Breast epithelium (tissue), 4 donors: ENCODE measurements at regions of chr6 and their contacts with region 1.

Region 1: DNA sequence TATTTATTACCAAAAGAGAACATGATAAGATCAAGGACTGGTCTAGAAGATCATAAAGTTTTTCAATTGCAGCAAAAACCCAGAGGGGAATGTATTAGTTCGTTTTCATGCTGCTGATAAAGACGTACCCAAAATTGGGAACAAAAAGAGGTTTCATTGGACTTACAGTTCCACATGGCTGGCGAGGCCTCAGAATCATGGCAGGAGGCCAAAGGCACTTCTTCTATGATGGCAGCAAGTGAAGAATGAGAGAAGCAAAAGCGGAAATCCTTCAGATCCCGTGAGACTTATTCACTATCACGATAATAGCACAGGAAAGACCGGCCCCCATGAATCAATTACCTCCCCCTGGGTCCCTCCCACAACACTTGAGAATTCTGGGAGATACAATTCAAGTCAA is 57.7 kb upstream of the HIVEP2 start:
- DNase-seq: no peak
- H3K4me3 ChIP-seq: no peak overlapping the region
- H3K27ac ChIP-seq: no peak overlapping the region
- H3K4me1 ChIP-seq: no peaks in the 10 kb centered on the region
- H3K27me3 ChIP-seq: no peaks in the 10 kb centered on the region
- CTCF ChIP-seq: no peak
- POLR2A ChIP-seq: no peak

Region 2: DNA sequence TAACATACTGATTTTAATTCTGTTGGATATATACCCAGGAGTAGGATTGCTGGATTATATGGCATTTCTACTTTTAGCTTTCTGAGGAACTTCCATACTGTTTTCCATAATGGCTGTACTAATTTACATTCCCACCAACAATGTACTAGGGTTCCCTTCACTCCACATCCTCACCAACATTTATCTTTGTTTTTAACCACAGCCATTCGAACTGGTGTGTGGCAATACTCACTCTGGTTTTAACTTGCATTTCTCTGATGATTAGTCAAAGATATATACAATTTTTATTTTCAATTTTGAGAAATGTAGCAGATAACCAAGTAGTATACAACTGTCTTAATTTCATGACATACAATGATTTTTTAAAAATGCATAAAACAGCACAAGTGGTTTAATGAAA is 731.2 kb before region 1 on chr6:
- intact Hi-C with region 1: no loop called
- DNase-seq: no peak
- H3K4me3 ChIP-seq: no peak overlapping the region
- H3K27ac ChIP-seq: no peak overlapping the region
- H3K4me1 ChIP-seq: no peaks in the 10 kb centered on the region
- H3K27me3 ChIP-seq: no peaks in the 10 kb centered on the region
- CTCF ChIP-seq: no peak
- POLR2A ChIP-seq: no peak

Region 3: DNA sequence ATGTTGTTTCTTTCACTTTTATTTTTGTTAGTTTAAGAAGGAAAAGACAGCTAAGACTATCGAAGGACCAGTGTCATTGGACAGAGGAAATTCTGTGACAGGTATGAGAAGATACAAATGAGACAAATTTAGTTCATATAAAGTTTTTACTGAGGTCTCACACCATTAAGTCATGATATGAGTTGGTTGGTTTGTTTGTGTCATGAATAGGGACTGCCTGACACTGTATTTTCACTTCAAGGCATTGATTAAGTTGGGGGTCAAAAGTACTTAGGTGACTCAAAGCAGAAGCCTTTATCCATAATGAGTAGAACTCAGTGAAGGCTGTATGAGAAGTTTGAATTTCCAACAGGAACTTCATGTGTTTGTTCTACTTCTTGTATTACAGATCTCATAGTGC is 36.4 kb before region 1 on chr6:
- intact Hi-C with region 1: loop called (anchors 2 kb)
- DNase-seq: no peak
- H3K4me3 ChIP-seq: no peak overlapping the region
- H3K27ac ChIP-seq: no peak overlapping the region
- H3K4me1 ChIP-seq: no peaks in the 10 kb centered on the region
- H3K27me3 ChIP-seq: no peaks in the 10 kb centered on the region
- CTCF ChIP-seq: no peak
- POLR2A ChIP-seq: no peak

Region 4: GRCh38 chr6:144190593-144190992 is 1187.9 kb after region 1 on chr6:
- intact Hi-C with region 1: no loop called
- DNase-seq: no peak
- H3K4me3 ChIP-seq: no peak overlapping the region
- H3K27ac ChIP-seq: no peak overlapping the region
- H3K4me1 ChIP-seq: no peaks in the 10 kb centered on the region
- H3K27me3 ChIP-seq: no peaks in the 10 kb centered on the region
- CTCF ChIP-seq: no peak
- POLR2A ChIP-seq: no peak